Common myeloid progenitor, CD34-positive (primary cell): ENCODE measurements at regions of chr1 and their contacts with region 1.

Region 1: GRCh38 chr1:205335643-205336091 is 14.1 kb upstream of the NUAK2 start:
- DNase-seq: peak; percentile 80 to 84 (median 84)
- H3K4me3 ChIP-seq: no peak overlapping the region
- H3K27ac ChIP-seq: no peak overlapping the region
- H3K4me1 ChIP-seq: no peaks in the 10 kb centered on the region
- H3K27me3 ChIP-seq: peaks cover 0 to 5% (median 0%) of the 10 kb centered on the region in 5 experiments

Region 2: GRCh38 chr1:205321164-205321958 is 14.3 kb before region 1 on chr1 and contains the start of gene NUAK2:
- CTCF ChIA-PET with region 1: interaction called, 67 read pairs
- POLR2A ChIA-PET with region 1: no interaction called
- DNase-seq: peak; percentile 56 to 76 (median 62)
- H3K4me3 ChIP-seq: peak within 1 kb of the TSS; percentile 10 to 92 (median 81)
- H3K27ac ChIP-seq: peak within 1 kb of the TSS in 1 of 2 experiments; percentile 40
- H3K4me1 ChIP-seq: peaks cover 16 to 55% (median 37%) of the 10 kb centered on the region in 4 experiments
- H3K27me3 ChIP-seq: peaks cover 0 to 37% (median 0%) of the 10 kb centered on the region in 5 experiments

Region 3: GRCh38 chr1:205346956-205347576 is 11.4 kb after region 1 on chr1:
- CTCF ChIA-PET with region 1: interaction called, 33 read pairs
- POLR2A ChIA-PET with region 1: interaction called, 3 read pairs
- DNase-seq: peak in 2 of 3 donors; percentile 33 to 44
- H3K4me3 ChIP-seq: no peak overlapping the region
- H3K27ac ChIP-seq: no peak overlapping the region
- H3K4me1 ChIP-seq: peaks cover 0 to 22% (median 16%) of the 10 kb centered on the region in 4 experiments
- H3K27me3 ChIP-seq: peaks cover 0 to 46% (median 35%) of the 10 kb centered on the region in 5 experiments

Region 4: GRCh38 chr1:205354259-205354904 is 18.7 kb after region 1 on chr1:
- CTCF ChIA-PET with region 1: interaction called, 33 read pairs
- POLR2A ChIA-PET with region 1: interaction called, 3 read pairs
- DNase-seq: peak; percentile 68 to 85 (median 78)
- H3K4me3 ChIP-seq: no peak overlapping the region
- H3K27ac ChIP-seq: no peak overlapping the region
- H3K4me1 ChIP-seq: no peaks in the 10 kb centered on the region
- H3K27me3 ChIP-seq: peaks cover 0 to 13% (median 2%) of the 10 kb centered on the region in 5 experiments